Activated B cell treated with CpG ODN at 0.5 μM for 24 hours (primary cell): ENCODE measurements at regions of chr10 and their contacts with region 1.

Region 1: GRCh38 chr10:101840741-101841453 is 2.7 kb downstream of the KCNIP2 start:
- DNase-seq: peak; percentile 80
- ATAC-seq: peak; percentile 64
- H3K4me3 Mint-ChIP-seq: peak overlapping the region; percentile 88
- H3K27ac Mint-ChIP-seq: peak overlapping the region; percentile 77
- H3K4me1 Mint-ChIP-seq: peaks cover 60% of the 10 kb centered on the region
- H3K27me3 Mint-ChIP-seq: no peaks in the 10 kb centered on the region
- CTCF ChIP-seq: no peak

Region 2: DNA sequence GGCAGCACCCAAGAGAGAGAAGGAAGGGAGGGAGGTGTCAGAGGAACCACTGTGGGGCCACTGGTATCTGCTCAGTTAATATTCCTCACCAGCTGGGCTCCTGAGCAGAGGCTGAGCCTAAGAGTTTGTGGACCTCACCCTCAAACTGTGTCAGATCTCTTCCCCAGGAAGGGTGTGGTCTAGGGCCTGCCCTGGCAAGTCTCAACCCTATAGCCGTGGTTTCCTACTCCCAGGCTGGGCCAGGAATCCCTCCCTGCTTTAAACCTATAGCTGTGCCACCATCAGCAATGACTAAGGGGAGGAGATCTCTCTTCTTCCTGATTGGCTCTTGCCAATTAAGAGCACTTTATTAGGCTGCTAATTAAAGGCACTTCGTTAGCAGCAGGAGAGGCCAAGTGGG is 282.7 kb before region 1 on chr10:
- CTCF ChIA-PET with region 1: no interaction called
- POLR2A ChIA-PET with region 1: no interaction called
- intact Hi-C with region 1: no loop called
- DNase-seq: no peak
- ATAC-seq: no peak
- H3K4me3 Mint-ChIP-seq: no peak overlapping the region
- H3K27ac Mint-ChIP-seq: no peak overlapping the region
- H3K4me1 Mint-ChIP-seq: no peaks in the 10 kb centered on the region
- H3K27me3 Mint-ChIP-seq: peaks cover 4% of the 10 kb centered on the region
- CTCF ChIP-seq: no peak

Region 3: DNA sequence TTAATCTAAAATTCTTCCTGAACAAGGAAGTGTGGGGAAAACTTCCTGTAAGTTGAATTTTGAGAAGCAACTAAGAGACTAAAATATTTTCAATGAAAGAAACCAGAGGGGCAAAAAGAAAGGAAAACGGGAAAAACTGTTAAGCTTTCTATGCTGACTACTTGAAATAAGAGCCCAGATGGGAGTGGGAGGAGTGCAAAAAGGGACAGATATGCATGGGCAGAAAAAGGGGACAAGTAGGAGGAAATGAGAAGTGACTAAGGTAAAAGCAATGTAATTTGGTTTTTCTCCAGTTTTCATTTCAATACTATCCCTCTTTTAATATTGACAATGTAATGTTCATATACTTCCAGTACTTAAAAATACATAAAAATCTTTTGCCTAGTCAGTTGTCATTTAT is 33.7 kb before region 1 on chr10:
- CTCF ChIA-PET with region 1: interaction called, 5 read pairs
- POLR2A ChIA-PET with region 1: interaction called, 10 read pairs
- intact Hi-C with region 1: no loop called
- DNase-seq: no peak
- ATAC-seq: no peak
- H3K4me3 Mint-ChIP-seq: no peak overlapping the region
- H3K27ac Mint-ChIP-seq: no peak overlapping the region
- H3K4me1 Mint-ChIP-seq: peaks cover 11% of the 10 kb centered on the region
- H3K27me3 Mint-ChIP-seq: no peaks in the 10 kb centered on the region
- CTCF ChIP-seq: no peak

Region 4: GRCh38 chr10:101858723-101859500 is 18.0 kb after region 1 on chr10:
- CTCF ChIA-PET with region 1: interaction called, 16 read pairs
- POLR2A ChIA-PET with region 1: interaction called, 3 read pairs
- intact Hi-C with region 1: no loop called
- DNase-seq: no peak
- ATAC-seq: no peak
- H3K4me3 Mint-ChIP-seq: no peak overlapping the region
- H3K27ac Mint-ChIP-seq: peak overlapping the region; percentile 12
- H3K4me1 Mint-ChIP-seq: peaks cover 17% of the 10 kb centered on the region
- H3K27me3 Mint-ChIP-seq: no peaks in the 10 kb centered on the region
- CTCF ChIP-seq: no peak

Region 5: GRCh38 chr10:102001435-102002068 is 160.7 kb after region 1 on chr10:
- CTCF ChIA-PET with region 1: interaction called, 372 read pairs
- POLR2A ChIA-PET with region 1: interaction called, 100 read pairs
- intact Hi-C with region 1: no loop called
- DNase-seq: no peak
- ATAC-seq: peak; percentile 86
- H3K4me3 Mint-ChIP-seq: peak overlapping the region; percentile 73
- H3K27ac Mint-ChIP-seq: peak overlapping the region; percentile 93
- H3K4me1 Mint-ChIP-seq: peaks cover 82% of the 10 kb centered on the region
- H3K27me3 Mint-ChIP-seq: no peaks in the 10 kb centered on the region
- CTCF ChIP-seq: no peak

Region 6: GRCh38 chr10:102055647-102056419 is 214.9 kb after region 1 on chr10 and contains the start of gene ARMH3:
- CTCF ChIA-PET with region 1: interaction called, 12 read pairs
- POLR2A ChIA-PET with region 1: interaction called, 6 read pairs
- intact Hi-C with region 1: no loop called
- DNase-seq: peak; percentile 83
- ATAC-seq: peak; percentile 93
- H3K4me3 Mint-ChIP-seq: peak within 1 kb of the TSS; percentile 94
- H3K27ac Mint-ChIP-seq: peak within 1 kb of the TSS; percentile 91
- H3K4me1 Mint-ChIP-seq: peaks cover 45% of the 10 kb centered on the region
- H3K27me3 Mint-ChIP-seq: no peaks in the 10 kb centered on the region
- CTCF ChIP-seq: no peak
- total RNA-seq, gene ARMH3: 26.8 and 35.4 TPM in 2 replicates

Region 7: GRCh38 chr10:102114861-102115618 is 274.1 kb after region 1 on chr10:
- CTCF ChIA-PET with region 1: interaction called, 7 read pairs
- POLR2A ChIA-PET with region 1: no interaction called
- intact Hi-C with region 1: loop called (anchors 1 kb)
- DNase-seq: peak; percentile 70
- ATAC-seq: peak; percentile 78
- H3K4me3 Mint-ChIP-seq: peak overlapping the region; percentile 91
- H3K27ac Mint-ChIP-seq: peak overlapping the region; percentile 94
- H3K4me1 Mint-ChIP-seq: peaks cover 62% of the 10 kb centered on the region
- H3K27me3 Mint-ChIP-seq: no peaks in the 10 kb centered on the region
- CTCF ChIP-seq: no peak